GM10248 (cell line): ENCODE measurements at regions of chr9 and their contacts with region 1.

Region 1: DNA sequence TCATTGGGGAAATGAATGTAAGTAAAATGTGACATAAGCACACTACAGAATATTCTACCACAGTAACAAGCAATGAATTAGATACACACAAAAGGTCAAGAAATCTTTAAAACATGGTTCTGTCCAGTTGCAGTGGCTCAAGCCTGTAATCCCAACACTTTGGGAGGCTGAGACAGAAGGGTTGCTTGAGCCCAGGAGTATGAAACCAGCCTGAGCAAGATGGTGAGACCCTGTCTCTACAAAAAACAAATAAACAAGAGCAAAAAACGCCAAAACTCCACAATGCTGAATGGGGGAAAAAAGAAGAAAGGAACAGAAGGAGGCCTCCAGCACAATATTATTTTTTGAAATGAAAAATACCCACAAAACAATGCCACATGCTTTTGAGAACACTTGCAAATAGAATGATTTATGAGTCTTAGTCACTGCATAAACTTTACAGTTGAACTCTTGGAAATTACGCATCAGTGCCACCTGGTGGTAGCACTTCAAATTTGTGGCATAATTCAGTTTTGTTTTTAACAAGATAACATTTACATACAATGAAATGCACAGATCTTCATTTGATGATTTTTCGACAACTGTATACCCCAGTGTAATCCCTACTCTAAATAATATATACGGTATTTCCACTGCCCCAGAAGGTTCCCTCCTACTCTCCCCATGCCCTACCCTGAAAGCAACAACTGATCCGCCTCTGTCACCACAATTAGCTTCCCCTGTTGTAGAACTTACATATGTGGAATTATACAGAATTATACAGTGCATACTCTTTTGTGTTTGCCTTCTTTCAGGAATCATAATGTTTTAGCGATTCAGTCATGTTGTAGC is 14.4 kb upstream of the SPINK4 start:
- DNase-seq: peak; percentile 45
- CTCF ChIP-seq: peak; percentile 63

Region 2: GRCh38 chr9:33107735-33108134 is 117.8 kb before region 1 on chr9:
- CTCF ChIA-PET with region 1: interaction called, 12 read pairs
- POLR2A ChIA-PET with region 1: no interaction called
- DNase-seq: no peak
- CTCF ChIP-seq: no peak

Region 3: DNA sequence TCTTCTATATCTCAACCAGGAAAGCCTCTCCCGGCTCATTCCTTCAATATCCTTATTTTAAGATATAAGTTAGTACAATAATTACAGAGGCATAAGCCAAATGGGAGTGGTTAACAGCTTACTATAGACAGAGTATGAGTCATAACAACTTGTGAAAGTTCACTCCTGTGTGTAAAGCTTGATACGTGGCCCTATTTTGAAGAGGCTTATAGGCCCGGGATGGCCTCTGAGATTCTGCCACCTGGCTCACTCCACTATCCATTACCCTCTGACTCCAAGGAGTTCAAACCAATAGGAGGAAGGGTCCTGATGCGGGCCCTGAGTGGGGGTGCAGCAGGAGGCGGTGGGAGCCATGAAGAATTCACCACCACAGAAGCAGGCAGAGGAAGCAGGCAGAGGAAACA is 95.0 kb before region 1 on chr9:
- CTCF ChIA-PET with region 1: interaction called, 17 read pairs
- POLR2A ChIA-PET with region 1: no interaction called
- DNase-seq: peak; percentile 66
- CTCF ChIP-seq: no peak

Region 4: DNA sequence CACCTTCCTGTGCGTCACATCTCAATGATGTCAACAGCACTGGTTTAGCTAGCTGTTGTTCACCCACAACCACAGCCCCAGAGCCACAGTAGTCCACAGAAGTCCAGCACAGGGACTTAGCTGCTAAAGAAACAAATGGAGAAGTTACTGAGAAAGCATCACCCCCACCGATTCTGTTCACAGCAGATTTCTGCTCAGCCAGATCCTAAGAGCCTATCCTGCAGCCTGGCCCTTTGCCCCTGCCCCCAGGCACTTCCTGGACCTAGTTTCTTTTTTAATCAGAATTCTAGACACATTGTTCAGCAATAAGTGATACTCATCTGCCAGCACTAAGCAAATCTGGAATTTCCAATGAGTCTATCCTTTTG is 65.8 kb before region 1 on chr9:
- CTCF ChIA-PET with region 1: interaction called, 15 read pairs
- POLR2A ChIA-PET with region 1: interaction called, 5 read pairs
- DNase-seq: no peak
- CTCF ChIP-seq: no peak

Region 5: DNA sequence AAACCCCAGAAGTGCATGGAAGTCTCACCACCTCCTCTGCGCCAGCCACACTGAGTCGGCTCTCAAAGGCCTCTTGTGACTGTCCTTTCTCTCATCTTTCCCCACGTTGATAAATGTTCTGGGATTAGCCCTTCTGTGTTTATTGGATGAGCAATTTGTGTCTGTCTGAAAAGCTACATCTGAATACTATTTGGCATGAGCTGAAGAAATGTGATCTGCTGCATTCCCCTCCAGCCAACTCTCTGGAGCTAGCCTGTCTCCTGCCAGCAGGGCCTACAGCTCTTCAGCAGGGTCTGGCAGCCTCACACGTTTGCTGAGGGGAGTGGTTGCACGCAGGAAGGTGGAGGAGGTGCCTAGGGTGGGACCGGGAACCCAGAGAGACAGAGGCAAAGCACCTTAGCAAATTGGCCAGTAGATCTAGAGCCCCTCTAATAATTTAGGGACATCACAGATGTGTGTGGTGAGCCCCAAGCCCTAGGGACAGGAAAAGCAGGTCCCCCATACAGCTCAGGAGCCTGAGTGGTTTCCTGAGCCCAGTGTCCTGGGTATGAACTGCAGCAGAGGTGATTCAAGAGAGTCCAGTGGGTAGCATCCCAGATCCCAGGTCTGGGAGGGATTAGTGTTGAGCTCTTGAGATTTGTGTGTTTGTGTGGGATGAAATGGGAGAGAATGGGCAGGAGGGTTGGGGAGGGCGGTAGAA is 37.9 kb before region 1 on chr9:
- CTCF ChIA-PET with region 1: interaction called, 11 read pairs
- POLR2A ChIA-PET with region 1: no interaction called
- DNase-seq: no peak
- CTCF ChIP-seq: no peak

Region 6: DNA sequence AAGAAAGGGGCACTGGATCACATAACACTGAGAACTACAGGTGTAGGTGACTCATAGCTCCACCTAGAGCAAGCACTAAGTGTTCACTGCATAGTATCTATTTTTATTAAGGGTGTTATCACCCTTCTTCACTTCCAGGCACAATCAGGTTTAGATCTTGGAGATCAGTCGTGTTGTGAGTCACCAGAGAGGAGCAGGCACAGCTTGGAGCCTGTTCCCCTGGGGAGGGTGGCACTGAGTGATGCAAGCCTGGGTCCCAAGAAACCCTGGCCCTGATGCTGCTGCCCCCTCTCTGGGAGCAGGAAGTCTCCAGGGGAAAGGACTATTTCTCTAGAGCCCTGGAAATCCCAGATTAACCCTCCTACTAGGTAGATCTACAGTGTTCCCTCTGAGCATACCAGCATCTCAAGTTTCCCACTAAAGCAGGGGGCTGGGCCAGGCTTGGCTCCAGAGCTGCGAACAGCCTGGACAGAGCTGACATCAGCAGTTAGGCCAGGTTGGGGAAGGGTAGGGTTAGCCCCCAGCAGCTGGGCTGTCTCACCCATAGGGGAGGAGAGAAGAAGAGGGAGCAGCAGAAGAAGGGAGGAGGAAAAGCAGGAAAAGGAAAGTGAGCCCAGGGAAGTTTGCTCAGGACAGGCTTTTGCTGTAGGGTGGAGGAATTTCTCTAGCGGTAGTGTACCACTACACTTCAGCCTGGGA is 13.7 kb before region 1 on chr9:
- CTCF ChIA-PET with region 1: interaction called, 10 read pairs
- POLR2A ChIA-PET with region 1: no interaction called
- DNase-seq: no peak
- CTCF ChIP-seq: no peak

Region 7: DNA sequence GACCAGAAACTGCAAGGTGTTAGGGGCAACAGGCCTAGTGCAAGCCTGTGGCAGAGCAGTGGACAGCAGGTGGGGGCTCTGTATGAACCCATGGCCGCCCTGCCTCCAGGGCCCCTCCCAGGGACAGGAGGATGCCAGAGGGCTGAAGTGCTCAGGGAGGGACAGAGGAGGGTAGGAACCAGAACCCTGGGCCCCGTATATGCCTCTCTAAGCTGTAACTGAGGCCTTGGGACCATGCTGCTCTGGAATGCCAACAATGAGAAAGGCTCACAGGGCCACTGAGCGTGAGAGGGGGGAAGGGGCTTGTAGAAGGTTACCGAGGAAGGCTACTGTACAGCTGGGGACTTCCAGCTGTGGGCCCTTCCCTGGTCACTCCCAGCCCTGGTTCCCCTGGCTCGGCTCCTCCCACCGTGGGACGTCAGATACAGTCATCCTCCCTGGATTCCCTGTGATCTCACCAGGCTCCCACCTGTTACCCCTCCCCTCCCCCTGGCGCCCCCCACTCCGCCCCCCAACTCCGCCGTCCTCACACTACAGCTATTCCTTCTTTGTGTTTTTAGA is 155.8 kb after region 1 on chr9:
- CTCF ChIA-PET with region 1: no interaction called
- POLR2A ChIA-PET with region 1: no interaction called
- DNase-seq: no peak
- CTCF ChIP-seq: no peak